GM12878 (cell line): ENCODE measurements at regions of chr21 and their contacts with region 1.

Region 1: GRCh38 chr21:46500224-46500856 is 41.6 kb downstream of the DIP2A start:
- DNase-seq: no peak
- ATAC-seq: peak; percentile 62
- H3K4me3 ChIP-seq: no peak overlapping the region
- H3K27ac ChIP-seq: peak overlapping the region; percentile 80
- H3K4me1 ChIP-seq: peaks cover 26% of the 10 kb centered on the region
- H3K27me3 ChIP-seq: no peaks in the 10 kb centered on the region
- CTCF ChIP-seq: no peak
- EP300 ChIP-seq: no peak
- POLR2A ChIP-seq: no peak
- RAD21 ChIP-seq: no peak

Region 2: DNA sequence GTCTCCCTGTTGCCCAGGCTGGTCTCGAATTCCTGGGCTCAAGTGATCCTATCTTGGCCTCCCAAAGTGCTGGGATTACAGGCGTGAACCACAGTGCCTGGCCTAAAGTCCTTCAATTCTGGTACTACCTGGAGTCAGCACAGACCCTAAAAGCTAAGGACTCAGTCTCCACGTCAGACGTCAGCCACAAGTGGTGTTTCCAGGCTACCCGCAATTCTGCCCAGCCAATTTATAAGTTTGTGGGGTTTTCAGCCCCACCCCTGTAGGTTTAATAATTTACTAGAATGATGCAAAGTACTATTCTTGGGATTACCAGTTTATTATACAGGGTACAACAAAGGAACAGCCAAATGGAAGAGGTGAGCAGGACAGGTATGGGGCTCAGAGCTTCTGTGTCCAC is 52.2 kb before region 1 on chr21:
- CTCF ChIA-PET with region 1: no interaction called
- POLR2A ChIA-PET with region 1: no interaction called
- RAD21 ChIA-PET with region 1: no interaction called
- SMC1A ChIA-PET with region 1: no interaction called
- in situ Hi-C with region 1: no loop called
- intact Hi-C with region 1: no loop called
- DNase-seq: no peak
- ATAC-seq: no peak
- H3K4me3 ChIP-seq: no peak overlapping the region
- H3K27ac ChIP-seq: no peak overlapping the region
- H3K4me1 ChIP-seq: no peaks in the 10 kb centered on the region
- H3K27me3 ChIP-seq: no peaks in the 10 kb centered on the region
- CTCF ChIP-seq: no peak
- EP300 ChIP-seq: no peak
- POLR2A ChIP-seq: no peak
- RAD21 ChIP-seq: no peak

Region 3: GRCh38 chr21:46458315-46459023 is 41.9 kb before region 1 on chr21 and contains the start of gene DIP2A:
- CTCF ChIA-PET with region 1: interaction called, 4 read pairs
- POLR2A ChIA-PET with region 1: interaction called, 3 read pairs
- RAD21 ChIA-PET with region 1: interaction called, 5 read pairs
- SMC1A ChIA-PET with region 1: interaction called, 4 read pairs
- in situ Hi-C with region 1: no loop called
- intact Hi-C with region 1: loop called (anchors 2 kb)
- DNase-seq: peak; percentile 85
- ATAC-seq: peak; percentile 97
- H3K4me3 ChIP-seq: peak within 1 kb of the TSS; percentile 87
- H3K27ac ChIP-seq: peak within 1 kb of the TSS; percentile 95
- H3K4me1 ChIP-seq: no peaks in the 10 kb centered on the region
- H3K27me3 ChIP-seq: no peaks in the 10 kb centered on the region
- CTCF ChIP-seq: peak in 2 of 3 experiments; percentile 9; a peak in 1 of 6 replicates
- EP300 ChIP-seq: no peak
- POLR2A ChIP-seq: peak; percentile 96
- RAD21 ChIP-seq: no peak
- polyA plus RNA-seq, gene DIP2A: 1.7 to 3.4 TPM

Region 4: DNA sequence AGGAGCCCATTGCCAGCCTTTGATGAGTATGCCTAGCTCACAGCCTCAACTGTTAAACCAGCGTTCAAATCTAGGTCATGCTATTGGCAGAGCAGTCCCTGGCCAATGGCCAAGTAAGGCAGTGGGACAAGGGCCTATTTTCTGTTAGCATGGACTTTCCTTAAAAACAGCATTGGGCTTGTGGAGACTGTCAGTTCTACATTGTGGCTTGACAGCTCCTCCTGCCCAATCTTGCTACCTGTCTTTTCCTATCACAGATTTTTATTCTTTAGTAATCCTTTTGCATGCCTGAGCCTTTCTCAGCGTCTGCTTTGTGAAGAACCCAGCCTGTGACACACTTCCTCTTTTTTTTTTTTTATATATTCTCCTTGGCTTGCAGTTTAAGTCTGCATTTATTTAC is 14.8 kb after region 1 on chr21:
- CTCF ChIA-PET with region 1: interaction called, 5 read pairs
- POLR2A ChIA-PET with region 1: interaction called, 4 read pairs
- RAD21 ChIA-PET with region 1: interaction called, 3 read pairs
- SMC1A ChIA-PET with region 1: interaction called, 12 read pairs
- in situ Hi-C with region 1: no loop called
- intact Hi-C with region 1: no loop called
- DNase-seq: no peak
- ATAC-seq: peak; percentile 80
- H3K4me3 ChIP-seq: no peak overlapping the region
- H3K27ac ChIP-seq: peak overlapping the region; percentile 13; the same call in 1 of the 2 replicates
- H3K4me1 ChIP-seq: peaks cover 5% of the 10 kb centered on the region
- H3K27me3 ChIP-seq: no peaks in the 10 kb centered on the region
- CTCF ChIP-seq: no peak
- EP300 ChIP-seq: no peak
- POLR2A ChIP-seq: no peak
- RAD21 ChIP-seq: no peak

Region 5: GRCh38 chr21:46635324-46636172 is 135.2 kb after region 1 on chr21 and contains the start of gene PRMT2:
- CTCF ChIA-PET with region 1: interaction called, 5 read pairs
- POLR2A ChIA-PET with region 1: interaction called, 3 read pairs
- RAD21 ChIA-PET with region 1: interaction called, 3 read pairs
- SMC1A ChIA-PET with region 1: interaction called, 10 read pairs
- in situ Hi-C with region 1: no loop called
- intact Hi-C with region 1: no loop called
- DNase-seq: peak; percentile 86
- ATAC-seq: peak; percentile 94
- H3K4me3 ChIP-seq: peak within 1 kb of the TSS; percentile 83
- H3K27ac ChIP-seq: peak within 1 kb of the TSS; percentile 85
- H3K4me1 ChIP-seq: no peaks in the 10 kb centered on the region
- H3K27me3 ChIP-seq: no peaks in the 10 kb centered on the region
- CTCF ChIP-seq: no peak
- EP300 ChIP-seq: no peak
- POLR2A ChIP-seq: peak; percentile 96
- RAD21 ChIP-seq: no peak
- polyA plus RNA-seq, gene PRMT2: 16.1 to 24.1 TPM